Panc1 (cell line): ENCODE measurements at regions of chr6 and their contacts with region 1.

Region 1: GRCh38 chr6:33118525-33119123 is 42.8 kb downstream of the HLA-DPB1 start:
- DNase-seq: no peak
- ATAC-seq: peak; percentile 46; the same call in 1 of the 2 replicates
- H3K4me3 ChIP-seq: no peak overlapping the region
- H3K27ac ChIP-seq: no peak overlapping the region
- H3K4me1 ChIP-seq: peaks cover 5% of the 10 kb centered on the region; the same call in 1 of the 2 replicates
- H3K27me3 ChIP-seq: peaks cover 23% of the 10 kb centered on the region
- CTCF ChIP-seq: peak; percentile 79

Region 2: GRCh38 chr6:33248925-33249731 is 130.5 kb after region 1 on chr6:
- CTCF ChIA-PET with region 1: interaction called, 4 read pairs
- POLR2A ChIA-PET with region 1: no interaction called
- in situ Hi-C with region 1: no loop called
- intact Hi-C with region 1: loop called (anchors 2 kb)
- DNase-seq: peak; percentile 97
- ATAC-seq: peak; percentile 93
- H3K4me3 ChIP-seq: peak overlapping the region; percentile 67 to 82
- H3K27ac ChIP-seq: peak overlapping the region; percentile 98
- H3K4me1 ChIP-seq: peaks cover 14% of the 10 kb centered on the region
- H3K27me3 ChIP-seq: no peaks in the 10 kb centered on the region
- CTCF ChIP-seq: no peak